Gastrocnemius medialis (tissue), 4 donors: ENCODE measurements at regions of chr22 and their contacts with region 1.

Region 1: DNA sequence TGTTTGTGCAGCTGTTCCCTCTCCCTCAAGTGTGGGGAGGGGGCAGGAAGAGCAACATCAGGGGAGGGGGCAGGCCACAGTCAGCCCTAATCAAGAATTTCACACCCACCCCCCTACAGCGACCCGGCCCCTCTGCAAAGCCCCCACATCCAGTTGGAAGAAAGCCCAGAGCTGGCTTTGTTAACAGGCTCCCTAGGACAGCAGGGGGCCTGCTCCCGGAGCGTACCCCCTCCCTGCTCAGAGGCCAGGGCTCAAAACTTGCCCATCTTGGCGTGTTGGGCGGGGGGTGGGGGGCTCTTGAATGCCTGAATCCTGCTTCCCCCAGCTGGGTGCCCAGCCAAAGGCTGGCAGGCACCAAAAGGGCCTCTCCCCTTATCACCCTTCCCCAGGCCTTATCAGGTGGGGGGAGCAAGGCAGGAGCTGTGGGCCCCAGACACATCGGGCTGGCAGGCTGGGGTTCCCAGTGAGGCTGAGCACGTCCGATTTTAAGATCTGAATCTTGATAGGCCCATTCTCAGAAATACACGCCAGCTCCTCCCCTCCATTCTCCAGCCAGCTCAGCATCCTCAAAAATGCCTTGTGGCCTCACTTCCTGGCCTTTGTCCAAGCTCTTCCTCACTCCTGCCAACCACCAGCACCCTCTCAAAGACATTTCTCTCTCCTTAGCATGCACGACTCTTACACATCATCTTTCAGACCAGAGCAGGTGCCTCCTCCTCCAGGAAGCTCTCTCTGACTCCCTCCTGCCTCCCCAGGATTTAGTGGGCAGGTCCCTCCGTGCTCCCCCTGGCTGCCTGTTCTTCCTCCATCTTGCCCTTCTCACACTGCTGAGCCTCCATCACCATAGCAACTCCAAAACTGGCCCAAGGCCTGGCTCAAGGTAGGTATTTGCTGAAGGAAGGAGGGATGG is 384.8 kb downstream of the MN1 start:
- DNase-seq: no peak
- ATAC-seq: no peak
- H3K4me3 ChIP-seq: no peak overlapping the region
- H3K27ac ChIP-seq: no peak overlapping the region
- H3K4me1 ChIP-seq: peaks cover 5 to 14% of the 10 kb centered on the region in 2 donors
- H3K27me3 ChIP-seq: peaks cover 13 to 34% (median 16%) of the 10 kb centered on the region in 3 donors
- CTCF ChIP-seq: no peak
- POLR2A ChIP-seq: no peak

Region 2: DNA sequence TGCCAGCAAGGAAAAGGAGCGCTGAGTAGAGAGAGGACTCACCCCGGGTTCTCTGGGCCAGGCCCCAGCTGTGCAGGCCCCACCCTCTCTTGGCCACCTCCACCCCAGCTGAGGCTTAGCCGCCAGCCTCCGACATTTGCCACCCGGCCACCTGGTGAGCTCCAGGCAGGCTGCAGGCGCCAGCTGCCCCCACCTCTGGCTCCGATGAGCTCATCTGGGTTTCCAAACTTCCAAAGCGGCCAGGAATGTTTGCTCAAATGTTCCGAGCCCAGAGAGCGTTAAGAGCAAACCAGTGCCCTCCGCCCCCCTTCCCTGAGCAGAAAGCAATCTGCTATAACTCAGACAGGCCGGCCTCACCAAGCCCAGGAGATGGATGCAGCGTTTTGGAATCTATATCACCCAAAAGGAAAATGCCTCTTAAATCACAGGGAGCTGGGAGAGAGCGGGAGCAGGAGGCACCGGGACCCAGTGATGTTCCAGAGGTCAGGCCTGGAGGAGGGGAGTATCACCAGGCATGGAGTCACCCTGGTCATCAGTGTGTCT is 393.9 kb after region 1 on chr22:
- in situ Hi-C with region 1: loop called in 1 of 4 experiments (anchors 10 kb)
- intact Hi-C with region 1: no loop called
- DNase-seq: peak; percentile 41 to 81
- ATAC-seq: peak; percentile 48 to 69
- H3K4me3 ChIP-seq: peak overlapping the region in 1 of 4 donors; percentile 8
- H3K27ac ChIP-seq: peak overlapping the region; percentile 18 to 62 (median 45)
- H3K4me1 ChIP-seq: peaks cover 8 to 16% of the 10 kb centered on the region in 2 donors
- H3K27me3 ChIP-seq: no peaks in the 10 kb centered on the region
- CTCF ChIP-seq: no peak
- POLR2A ChIP-seq: no peak